GM12878 (cell line): ENCODE measurements at regions of chr1 and their contacts with region 1.

Region 1: DNA sequence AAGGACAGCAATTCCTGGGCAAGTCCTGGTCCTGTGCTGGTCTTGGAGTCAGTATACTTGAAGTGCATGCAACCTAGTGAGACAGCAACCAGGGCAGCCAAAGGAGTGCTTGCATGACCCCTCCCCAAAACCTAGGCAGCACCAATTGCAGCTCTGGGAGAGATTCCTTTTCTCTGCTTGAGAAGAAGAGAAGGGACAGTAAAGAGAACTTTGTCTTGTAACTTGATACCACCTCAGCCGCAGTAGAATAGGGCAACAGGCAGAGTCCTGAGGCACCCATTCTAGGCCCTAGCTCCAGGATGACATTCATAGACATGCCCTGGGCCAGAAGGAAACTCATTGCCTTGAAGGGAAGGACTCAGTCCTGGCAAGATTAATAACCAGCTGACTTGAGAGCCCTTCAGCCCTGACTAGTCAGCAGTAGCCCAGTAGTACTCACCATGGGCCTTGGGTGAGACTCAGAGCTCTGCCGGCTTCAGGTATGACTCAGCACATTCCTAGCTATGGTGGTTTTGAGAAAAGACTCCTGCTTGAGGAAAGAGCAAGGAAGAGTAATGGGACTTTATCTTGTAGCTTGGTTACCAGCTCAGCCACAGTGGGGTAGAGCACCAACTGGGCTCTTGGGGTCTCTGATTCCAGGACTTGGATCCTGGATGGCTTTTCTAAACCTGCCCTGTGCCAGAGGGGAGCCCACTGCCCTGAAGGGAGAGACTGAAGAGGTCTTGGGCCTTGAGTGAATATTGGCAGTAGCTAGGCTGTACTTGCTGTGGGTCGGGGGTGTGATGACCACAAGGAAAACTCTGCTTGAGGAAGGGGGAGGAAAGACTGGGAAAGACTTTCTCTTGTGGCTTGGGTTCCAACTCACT is 51.7 kb upstream of the ACADM start:
- DNase-seq: no peak
- ATAC-seq: no peak; the same call in 2 of the 3 replicates
- H3K4me3 ChIP-seq: no peak overlapping the region
- H3K27ac ChIP-seq: no peak overlapping the region
- H3K4me1 ChIP-seq: no peaks in the 10 kb centered on the region
- H3K27me3 ChIP-seq: no peaks in the 10 kb centered on the region
- CTCF ChIP-seq: no peak
- EP300 ChIP-seq: no peak
- POLR2A ChIP-seq: no peak
- RAD21 ChIP-seq: no peak

Region 2: DNA sequence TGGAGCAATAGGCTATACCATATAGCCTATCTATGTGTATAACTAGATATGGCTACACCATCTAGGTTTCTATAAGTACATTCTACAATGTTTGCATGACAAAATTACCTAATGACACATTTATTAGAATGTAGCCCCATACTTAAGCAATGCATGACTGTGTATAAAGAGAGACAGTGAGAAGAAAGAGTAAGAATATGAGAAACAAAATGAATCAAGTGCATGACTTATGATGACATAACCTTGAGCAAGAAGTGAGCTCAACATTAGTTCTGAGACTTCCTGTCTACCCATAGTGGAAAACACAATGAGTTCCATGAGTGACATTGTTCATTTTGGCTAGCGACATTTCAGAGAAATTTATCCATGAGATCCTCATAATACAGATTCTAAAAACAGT is 72.0 kb before region 1 on chr1:
- CTCF ChIA-PET with region 1: no interaction called
- POLR2A ChIA-PET with region 1: no interaction called
- RAD21 ChIA-PET with region 1: no interaction called
- SMC1A ChIA-PET with region 1: no interaction called
- in situ Hi-C with region 1: no loop called
- intact Hi-C with region 1: no loop called
- DNase-seq: no peak
- ATAC-seq: no peak
- H3K4me3 ChIP-seq: no peak overlapping the region
- H3K27ac ChIP-seq: no peak overlapping the region
- H3K4me1 ChIP-seq: no peaks in the 10 kb centered on the region
- H3K27me3 ChIP-seq: no peaks in the 10 kb centered on the region
- CTCF ChIP-seq: no peak
- EP300 ChIP-seq: no peak
- POLR2A ChIP-seq: no peak
- RAD21 ChIP-seq: no peak

Region 3: GRCh38 chr1:75707191-75707590 is 34.4 kb after region 1 on chr1:
- CTCF ChIA-PET with region 1: no interaction called
- POLR2A ChIA-PET with region 1: no interaction called
- RAD21 ChIA-PET with region 1: no interaction called
- SMC1A ChIA-PET with region 1: no interaction called
- in situ Hi-C with region 1: no loop called
- intact Hi-C with region 1: loop called (anchors 5 kb)
- DNase-seq: no peak
- ATAC-seq: no peak
- H3K4me3 ChIP-seq: no peak overlapping the region
- H3K27ac ChIP-seq: no peak overlapping the region
- H3K4me1 ChIP-seq: no peaks in the 10 kb centered on the region
- H3K27me3 ChIP-seq: no peaks in the 10 kb centered on the region
- CTCF ChIP-seq: no peak
- EP300 ChIP-seq: no peak
- POLR2A ChIP-seq: no peak
- RAD21 ChIP-seq: no peak

Region 4: GRCh38 chr1:75811211-75811981 is 138.6 kb after region 1 on chr1:
- CTCF ChIA-PET with region 1: no interaction called
- POLR2A ChIA-PET with region 1: no interaction called
- RAD21 ChIA-PET with region 1: no interaction called
- SMC1A ChIA-PET with region 1: no interaction called
- in situ Hi-C with region 1: no loop called
- intact Hi-C with region 1: loop called (anchors 5 kb)
- DNase-seq: no peak
- ATAC-seq: no peak
- H3K4me3 ChIP-seq: no peak overlapping the region
- H3K27ac ChIP-seq: no peak overlapping the region
- H3K4me1 ChIP-seq: no peaks in the 10 kb centered on the region
- H3K27me3 ChIP-seq: no peaks in the 10 kb centered on the region
- CTCF ChIP-seq: no peak
- EP300 ChIP-seq: no peak
- POLR2A ChIP-seq: no peak
- RAD21 ChIP-seq: no peak